ENCODE measurements at regions of chr15 and their contacts with region 1.

Region 1: DNA sequence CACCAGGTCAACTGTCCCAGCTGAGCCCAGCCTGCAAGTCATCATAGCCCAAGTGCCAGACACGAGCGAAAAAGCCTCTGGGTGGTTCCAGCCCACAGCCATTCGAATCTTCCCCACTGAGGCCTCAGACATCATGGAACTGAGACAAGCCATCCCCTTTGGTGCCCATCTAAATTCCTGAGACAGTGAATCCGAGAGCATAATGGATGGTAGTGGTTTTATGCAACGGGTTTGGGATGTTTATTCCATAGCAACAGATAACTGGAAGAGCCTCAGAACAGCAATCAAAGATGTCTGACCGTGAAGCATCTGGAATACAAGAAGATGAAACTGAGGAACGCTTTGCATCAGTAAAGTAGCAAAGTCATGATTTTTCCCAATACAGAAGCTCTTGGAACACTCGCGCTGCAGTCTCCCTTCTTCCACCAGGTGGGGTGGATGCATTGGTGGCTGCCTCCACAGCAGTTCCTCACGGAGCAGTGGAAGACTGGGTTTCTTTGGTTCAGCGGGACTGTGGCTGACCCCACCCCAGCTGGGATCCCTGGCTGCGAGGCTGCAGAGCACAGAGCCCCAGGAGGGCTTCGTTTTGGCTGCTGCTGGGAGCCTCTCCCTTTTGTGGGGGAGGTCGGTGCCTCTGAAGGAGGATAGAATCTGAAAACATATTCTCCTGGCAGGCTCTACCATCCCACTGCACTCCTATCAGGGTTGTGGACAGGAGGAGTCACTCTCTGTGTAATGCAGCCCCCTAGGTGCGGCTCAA is 26.4 kb upstream of the PDE8A start:
- DNase-seq: peak; percentile 76 to 89 (median 85)
- ATAC-seq: peak; percentile 92 to 95
- H3K4me3 ChIP-seq: peak overlapping the region; percentile 3
- H3K27ac ChIP-seq: no peak overlapping the region
- H3K4me1 ChIP-seq: peaks cover 4% of the 10 kb centered on the region
- H3K27me3 ChIP-seq: no peaks in the 10 kb centered on the region

Region 2: GRCh38 chr15:84855136-84855535 is 100.1 kb before region 1 on chr15:
- intact Hi-C with region 1: no loop called
- DNase-seq: no peak
- ATAC-seq: no peak
- H3K4me3 ChIP-seq: no peak overlapping the region
- H3K27ac ChIP-seq: peak overlapping the region; percentile 72
- H3K4me1 ChIP-seq: peaks cover 5% of the 10 kb centered on the region
- H3K27me3 ChIP-seq: no peaks in the 10 kb centered on the region

Region 3: DNA sequence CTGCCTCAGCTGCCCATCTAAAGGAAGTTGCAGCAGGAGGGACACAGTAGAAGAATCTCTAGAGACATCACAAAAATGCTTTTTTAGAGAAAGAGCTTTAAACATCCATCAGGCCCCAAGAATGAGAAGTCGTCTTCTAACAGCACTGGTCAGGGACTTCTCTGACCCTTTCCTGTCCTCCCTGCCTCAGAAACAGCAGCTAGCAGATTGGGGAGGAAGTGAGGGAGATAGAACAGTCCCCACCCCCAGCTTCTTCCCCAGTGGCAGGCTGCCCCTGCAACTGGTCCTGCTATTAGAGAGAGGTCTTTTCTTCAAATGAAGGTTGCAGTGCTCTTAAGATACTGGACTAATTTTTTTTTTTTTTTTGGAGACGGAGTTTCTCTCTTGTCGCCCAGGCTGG is 81.4 kb after region 1 on chr15:
- intact Hi-C with region 1: loop called in 2 of 4 experiments (anchors 2 to 5 kb)
- DNase-seq: peak in 1 of 3 donors; percentile 55
- ATAC-seq: peak; percentile 57 to 67
- H3K4me3 ChIP-seq: no peak overlapping the region
- H3K27ac ChIP-seq: peak overlapping the region; percentile 45
- H3K4me1 ChIP-seq: peaks cover 12% of the 10 kb centered on the region
- H3K27me3 ChIP-seq: no peaks in the 10 kb centered on the region

Region 4: DNA sequence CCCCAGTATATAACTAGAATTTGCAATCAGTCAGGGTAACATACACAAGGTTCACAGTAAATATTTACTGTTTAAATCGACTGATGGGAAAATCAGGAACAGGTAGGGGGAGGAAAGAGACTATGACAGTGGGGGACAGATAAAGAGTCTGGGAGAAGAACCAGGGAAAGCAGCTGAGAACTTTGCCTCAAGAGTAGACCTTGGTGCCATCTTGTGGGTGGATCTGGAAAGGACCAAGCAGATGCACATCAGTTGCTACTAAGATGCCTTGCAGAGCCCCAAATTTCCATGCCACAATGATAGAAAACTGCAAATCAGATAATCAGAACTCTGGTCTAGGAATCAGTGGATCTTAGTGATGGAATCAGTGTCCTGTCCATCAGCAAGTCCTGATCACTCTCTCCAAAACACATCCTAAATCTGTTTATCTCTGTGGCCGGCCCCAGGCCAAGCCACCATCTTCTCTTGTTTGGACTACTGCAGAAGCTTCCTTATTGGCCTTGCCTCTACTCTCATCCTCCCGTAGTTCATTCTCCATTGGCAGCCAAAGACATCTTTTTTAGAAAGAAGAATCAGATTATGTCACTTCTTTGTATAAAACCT is 89.1 kb after region 1 on chr15:
- intact Hi-C with region 1: loop called in 3 of 4 experiments (anchors 2 to 5 kb)
- DNase-seq: peak in 2 of 3 donors; percentile 44 to 73
- ATAC-seq: peak; percentile 79 to 84
- H3K4me3 ChIP-seq: no peak overlapping the region
- H3K27ac ChIP-seq: no peak overlapping the region
- H3K4me1 ChIP-seq: peaks cover 2% of the 10 kb centered on the region
- H3K27me3 ChIP-seq: no peaks in the 10 kb centered on the region

Region 5: GRCh38 chr15:85168642-85169173 is 213.4 kb after region 1 on chr15:
- intact Hi-C with region 1: loop called in 1 of 4 experiments (anchors 10 kb)
- DNase-seq: no peak
- ATAC-seq: peak in 1 of 2 donors; percentile 32
- H3K4me3 ChIP-seq: peak overlapping the region; percentile 12
- H3K27ac ChIP-seq: no peak overlapping the region
- H3K4me1 ChIP-seq: peaks cover 2% of the 10 kb centered on the region
- H3K27me3 ChIP-seq: no peaks in the 10 kb centered on the region